Naive thymus-derived CD8-positive, alpha-beta T cell (primary cell): ENCODE measurements at regions of chr5 and their contacts with region 1.

Region 1: DNA sequence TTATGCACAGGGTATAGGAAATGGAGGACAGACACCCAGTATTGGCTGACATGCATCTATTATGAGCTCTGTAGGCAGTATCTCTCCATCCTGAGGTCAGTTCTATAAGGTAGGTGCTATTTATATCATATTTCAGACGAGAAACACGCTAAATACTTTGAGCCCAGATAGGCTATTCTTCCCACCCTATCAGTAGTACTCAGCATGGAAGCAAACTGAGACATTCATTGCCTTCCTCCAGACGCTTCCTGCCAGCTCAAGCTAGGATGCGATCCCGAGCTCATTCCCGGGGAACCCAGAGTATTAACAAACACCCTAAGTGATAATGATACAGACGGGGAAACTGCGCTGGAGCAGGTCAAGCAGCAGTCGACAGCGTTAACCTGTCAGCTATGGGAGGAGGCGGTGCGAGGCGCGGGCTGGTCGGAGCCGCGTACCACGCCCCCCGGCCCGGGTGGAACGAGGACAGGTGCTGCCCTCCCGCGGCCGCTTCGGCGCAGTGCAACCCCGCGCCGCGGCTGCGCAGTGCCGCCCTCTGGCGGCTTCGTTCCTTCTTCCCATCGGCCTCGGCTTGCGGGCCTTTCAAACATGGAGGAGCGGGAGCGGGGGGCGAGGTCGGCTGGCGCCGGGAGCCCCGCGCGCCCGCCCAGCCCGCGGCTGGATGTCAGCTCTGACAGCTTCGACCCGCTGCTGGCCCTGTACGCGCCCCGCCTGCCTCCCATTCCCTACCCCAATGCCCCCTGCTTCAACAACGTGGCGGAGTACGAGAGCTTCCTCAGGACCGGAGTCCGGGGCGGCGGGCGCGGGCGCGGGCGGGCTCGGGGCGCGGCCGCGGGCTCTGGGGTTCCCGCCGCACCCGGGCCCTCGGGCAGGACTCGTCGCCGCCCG is at the start of gene LSM11:
- DNase-seq: peak; percentile 78 to 97 (median 90)
- ATAC-seq: peak; percentile 89 to 94
- H3K4me3 Mint-ChIP-seq: peak within 1 kb of the TSS; percentile 74 to 98 (median 94)
- H3K27ac Mint-ChIP-seq: peak within 1 kb of the TSS; percentile 72 to 95 (median 88)
- H3K4me1 Mint-ChIP-seq: peaks cover 12 to 25% (median 20%) of the 10 kb centered on the region in 4 donors
- H3K27me3 Mint-ChIP-seq: no peaks in the 10 kb centered on the region
- polyA plus RNA-seq, gene LSM11: 0.36 to 0.64 (median 0.42) TPM

Region 2: GRCh38 chr5:157718519-157718918 is 24.9 kb before region 1 on chr5:
- POLR2A ChIA-PET with region 1: no interaction called
- DNase-seq: peak in 4 of 10 donors; percentile 5 to 31 (median 26)
- ATAC-seq: peak; percentile 62 to 80
- H3K4me3 Mint-ChIP-seq: peak overlapping the region in 1 of 10 donors; percentile 66
- H3K27ac Mint-ChIP-seq: peak overlapping the region in 6 of 10 donors; percentile 12 to 82 (median 18)
- H3K4me1 Mint-ChIP-seq: peaks cover 5 to 17% (median 15%) of the 10 kb centered on the region in 4 donors
- H3K27me3 Mint-ChIP-seq: no peaks in the 10 kb centered on the region

Region 3: DNA sequence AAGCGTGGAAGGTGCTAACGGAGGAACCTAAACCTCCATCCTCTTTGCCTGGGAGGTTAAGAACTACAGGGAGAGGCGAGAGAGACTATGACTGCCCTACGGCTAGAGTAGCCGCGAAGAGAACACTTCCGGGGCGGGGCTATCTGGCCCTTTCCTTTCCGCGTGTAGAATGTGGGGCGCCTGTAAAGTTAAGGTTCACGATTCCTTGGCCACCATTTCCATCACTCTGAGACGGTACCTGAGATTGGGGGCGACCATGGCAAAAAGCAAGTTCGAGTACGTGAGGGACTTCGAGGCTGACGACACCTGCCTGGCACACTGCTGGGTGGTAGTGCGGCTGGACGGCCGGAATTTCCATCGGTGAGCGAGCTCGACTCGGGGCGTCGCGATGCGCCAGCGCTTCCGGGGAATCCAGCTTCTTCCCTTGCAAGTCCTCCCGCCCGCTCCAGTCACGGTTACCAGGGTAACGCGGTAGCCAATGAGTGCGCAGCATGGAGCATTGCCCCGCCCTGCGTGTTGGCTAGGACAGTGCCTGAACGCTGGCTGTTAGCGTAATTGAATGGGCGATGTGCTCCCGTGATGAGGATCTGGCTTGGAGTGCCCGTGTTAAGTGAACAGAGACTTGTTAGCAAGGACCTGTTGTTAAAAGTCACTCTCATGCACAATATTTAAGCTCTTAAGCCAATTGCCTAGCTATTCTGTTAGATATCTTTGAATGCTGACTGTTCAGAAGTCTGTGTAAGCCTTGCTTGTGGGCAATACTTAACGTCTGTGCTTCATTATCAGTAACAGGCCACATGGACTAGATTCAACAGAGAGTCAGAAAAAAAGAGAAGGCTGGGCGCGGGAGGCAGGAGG is 11.9 kb before region 1 on chr5 and contains the start of gene THG1L:
- POLR2A ChIA-PET with region 1: interaction called, 15 read pairs
- DNase-seq: peak; percentile 88 to 99 (median 97)
- ATAC-seq: peak; percentile 92 to 95
- H3K4me3 Mint-ChIP-seq: peak within 1 kb of the TSS; percentile 93 to 99 (median 96)
- H3K27ac Mint-ChIP-seq: peak within 1 kb of the TSS; percentile 91 to 99 (median 97)
- H3K4me1 Mint-ChIP-seq: peaks cover 6 to 31% (median 22%) of the 10 kb centered on the region in 4 donors
- H3K27me3 Mint-ChIP-seq: no peaks in the 10 kb centered on the region
- polyA plus RNA-seq, gene THG1L: 6.3 to 9.0 (median 8.0) TPM